CD14-positive monocyte (primary cell): ENCODE measurements at regions of chr3 and their contacts with region 1.

Region 1: GRCh38 chr3:10248184-10249080 is at the start of gene TATDN2:
- DNase-seq: peak; percentile 93 to 97 (median 96)
- H3K4me3 ChIP-seq: peak within 1 kb of the TSS; percentile 64 to 90 (median 80)
- H3K4me3 Mint-ChIP-seq: peak within 1 kb of the TSS; percentile 95 to 97
- H3K27ac ChIP-seq: peak within 1 kb of the TSS; percentile 48 to 89
- H3K27ac Mint-ChIP-seq: peak within 1 kb of the TSS; percentile 90 to 96 (median 92)
- H3K4me1 ChIP-seq: peaks cover 28 to 35% of the 10 kb centered on the region in 2 donors
- H3K4me1 Mint-ChIP-seq: peaks cover 30% of the 10 kb centered on the region
- H3K27me3 ChIP-seq: no peaks in the 10 kb centered on the region
- H3K27me3 Mint-ChIP-seq: no peaks in the 10 kb centered on the region
- CTCF ChIP-seq: no peak
- polyA plus RNA-seq, gene TATDN2: 6.0 to 27.1 (median 6.0) TPM

Region 2: DNA sequence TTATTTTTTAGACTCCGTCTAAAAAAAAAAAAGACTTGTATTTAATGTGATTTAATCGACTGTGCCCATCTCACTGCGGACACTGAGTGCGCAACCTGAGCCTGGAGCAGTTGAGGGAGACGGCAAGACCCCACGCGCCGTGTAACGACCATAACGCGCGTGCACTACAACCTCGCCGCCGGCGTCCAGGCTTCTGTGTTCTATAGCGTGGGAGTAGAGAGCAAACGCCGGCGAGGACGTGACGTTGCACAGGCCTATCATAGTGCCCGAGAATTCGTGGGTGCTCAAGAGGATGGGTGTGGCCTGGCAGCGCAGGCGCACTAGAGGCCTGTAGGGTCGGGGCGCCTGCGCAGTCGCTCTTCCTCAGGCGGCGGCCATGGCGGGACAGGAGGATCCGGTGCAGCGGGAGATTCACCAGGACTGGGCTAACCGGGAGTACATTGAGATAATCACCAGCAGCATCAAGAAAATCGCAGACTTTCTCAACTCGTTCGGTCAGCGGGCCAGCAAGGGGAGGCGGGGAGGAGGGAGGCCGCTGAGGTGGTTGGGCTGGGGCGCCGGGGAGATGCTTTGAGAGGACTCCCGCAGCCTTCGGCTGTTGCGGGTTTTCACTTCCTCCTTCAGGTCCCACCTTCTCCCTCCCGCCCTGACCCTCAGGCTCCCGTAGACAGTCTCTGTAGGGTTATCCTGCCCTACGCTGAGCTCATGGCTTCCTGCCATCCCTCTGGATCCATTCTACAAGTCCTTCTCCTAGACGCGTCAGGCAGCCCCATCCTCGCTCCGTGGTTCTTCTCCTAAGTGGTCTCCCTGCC is 132.9 kb before region 1 on chr3 and contains the start of gene BRK1:
- intact Hi-C with region 1: loop called in 1 of 2 experiments (anchors 5 kb)
- DNase-seq: peak; percentile 96 to 98 (median 97)
- H3K4me3 ChIP-seq: peak within 1 kb of the TSS; percentile 90 to 97 (median 96)
- H3K4me3 Mint-ChIP-seq: peak within 1 kb of the TSS; percentile 99 to 100
- H3K27ac ChIP-seq: peak within 1 kb of the TSS; percentile 78 to 96
- H3K27ac Mint-ChIP-seq: peak within 1 kb of the TSS; percentile 92 to 98 (median 97)
- H3K4me1 ChIP-seq: peaks cover 21% of the 10 kb centered on the region in 2 donors
- H3K4me1 Mint-ChIP-seq: peaks cover 21% of the 10 kb centered on the region
- H3K27me3 ChIP-seq: no peaks in the 10 kb centered on the region
- H3K27me3 Mint-ChIP-seq: peaks cover 3 to 8% (median 5%) of the 10 kb centered on the region in 3 donors
- CTCF ChIP-seq: no peak
- polyA plus RNA-seq, gene BRK1: 144 to 318 (median 295) TPM